Dorsolateral prefrontal cortex (tissue), 120 donors: ENCODE measurements at regions of chr2 and their contacts with region 1.

Region 1: GRCh38 chr2:127106951-127107621 is at the start of gene BIN1:
- DNase-seq: peak; percentile 78 to 96 (median 92)
- H3K4me3 ChIP-seq: peak within 1 kb of the TSS; percentile 75 to 100 (median 96)
- H3K27ac ChIP-seq: peak within 1 kb of the TSS; percentile 92 to 99 (median 98)
- H3K27me3 ChIP-seq: no peaks in the 10 kb centered on the region
- CTCF ChIP-seq: peak in 19 of 56 donors; percentile 5 to 39 (median 17)
- total RNA-seq, gene BIN1: 151 to 703 (median 290) TPM

Region 2: GRCh38 chr2:126602334-126602733 is 504.8 kb before region 1 on chr2:
- intact Hi-C with region 1: no loop called
- DNase-seq: no peak
- H3K4me3 ChIP-seq: no peak overlapping the region
- H3K27ac ChIP-seq: no peak overlapping the region
- H3K27me3 ChIP-seq: no peaks in the 10 kb centered on the region
- CTCF ChIP-seq: no peak

Region 3: DNA sequence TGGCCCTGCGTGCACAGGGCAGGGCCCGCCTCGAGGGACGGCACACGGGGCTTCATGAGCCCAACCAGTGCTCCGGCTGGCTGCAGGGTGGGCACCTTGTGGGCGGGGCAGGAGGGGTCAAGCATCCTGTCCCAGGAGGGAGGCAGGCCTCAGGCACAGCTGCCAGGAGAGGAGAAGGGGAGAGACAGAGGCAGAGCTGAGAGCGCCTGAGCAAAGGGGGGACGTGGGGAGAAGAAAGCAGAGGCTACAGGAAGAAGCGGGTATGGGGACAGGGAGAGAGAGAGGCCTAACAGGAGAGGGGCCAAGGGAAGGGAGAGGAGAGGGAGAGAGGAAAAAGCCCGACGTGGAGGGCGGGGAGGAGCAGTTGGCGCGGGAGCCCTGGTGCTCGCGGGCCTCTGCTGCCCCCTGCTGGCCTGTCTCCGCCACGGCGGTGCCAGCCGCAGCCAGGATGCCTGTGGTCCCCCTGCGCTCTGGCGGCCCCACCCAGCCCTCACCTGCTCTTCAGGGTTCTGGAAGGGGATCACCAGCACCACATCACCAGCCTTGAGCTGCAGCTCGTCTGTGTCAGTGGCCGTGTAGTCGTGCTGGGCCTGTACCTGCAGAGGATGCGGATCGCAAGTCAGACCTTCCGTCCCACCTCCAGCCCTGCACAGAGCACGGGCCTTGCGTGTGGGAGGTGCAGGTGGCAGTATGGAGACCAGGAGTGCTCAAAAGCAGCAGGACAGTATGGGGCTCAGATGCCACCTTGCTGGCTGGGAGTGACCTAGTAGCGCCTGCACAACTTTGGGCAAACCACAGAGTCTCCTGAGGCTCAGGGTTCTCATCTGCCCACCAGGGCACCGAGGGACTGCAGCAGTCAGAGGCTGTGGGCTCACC is 56.9 kb before region 1 on chr2:
- intact Hi-C with region 1: loop called in 1 of 2 experiments (anchors 10 kb)
- DNase-seq: peak; percentile 63 to 85 (median 75)
- H3K4me3 ChIP-seq: no peak overlapping the region
- H3K27ac ChIP-seq: peak overlapping the region in 58 of 59 donors; percentile 18 to 98 (median 86)
- H3K27me3 ChIP-seq: no peaks in the 10 kb centered on the region
- CTCF ChIP-seq: peak; percentile 76 to 99 (median 96)

Region 4: GRCh38 chr2:127072970-127073369 is 34.1 kb before region 1 on chr2:
- intact Hi-C with region 1: loop called (anchors 1 to 2 kb)
- DNase-seq: peak; percentile 44 to 97 (median 93)
- H3K4me3 ChIP-seq: peak overlapping the region in 8 of 59 donors; percentile 10 to 31 (median 18)
- H3K27ac ChIP-seq: peak overlapping the region; percentile 76 to 99 (median 95)
- H3K27me3 ChIP-seq: no peaks in the 10 kb centered on the region
- CTCF ChIP-seq: peak in 3 of 56 donors; percentile 6 to 21 (median 19)

Region 5: DNA sequence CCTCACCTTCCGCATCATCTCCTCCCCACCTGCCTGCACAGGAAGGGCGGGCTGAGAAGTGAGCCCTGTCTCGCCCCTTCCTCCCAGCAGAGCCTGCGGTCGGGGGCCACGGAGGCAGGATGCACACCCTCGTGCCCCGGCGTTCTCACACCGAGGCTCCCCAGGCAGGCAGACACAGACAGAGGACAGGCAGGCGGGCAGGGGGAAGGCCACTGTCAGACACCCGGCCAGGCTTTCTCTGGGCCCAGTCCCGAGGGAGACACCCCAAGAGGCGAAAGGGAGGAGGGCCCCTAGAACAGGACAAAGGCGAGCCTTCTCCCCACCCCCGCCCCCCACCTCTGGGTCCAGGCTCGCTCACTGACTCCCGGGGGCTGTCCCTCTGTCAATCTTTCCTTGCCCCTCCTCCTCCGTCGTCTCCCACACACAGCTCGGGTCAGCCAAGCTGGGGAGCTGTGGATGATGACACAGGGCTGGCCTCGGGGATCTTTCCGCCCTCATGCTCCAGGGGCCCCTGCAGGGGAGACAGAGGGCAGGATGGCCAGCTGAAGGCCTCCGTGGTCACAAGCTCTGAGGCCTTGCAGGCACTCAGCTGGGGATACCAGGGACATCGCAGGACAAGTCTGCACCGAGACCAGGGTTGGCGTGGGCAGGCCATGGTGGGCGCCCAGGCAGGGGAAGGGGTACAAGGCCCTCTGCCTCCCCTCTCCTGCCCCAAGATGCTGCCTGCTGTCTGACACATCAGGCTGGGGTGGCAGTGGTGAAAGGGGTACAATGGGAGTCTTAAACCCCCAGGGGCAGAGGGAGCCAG is 25.1 kb before region 1 on chr2:
- intact Hi-C with region 1: loop called (anchors 1 to 2 kb)
- DNase-seq: peak in 9 of 10 donors; percentile 70 to 88 (median 80)
- H3K4me3 ChIP-seq: peak overlapping the region in 54 of 59 donors; percentile 1 to 61 (median 39)
- H3K27ac ChIP-seq: peak overlapping the region in 58 of 59 donors; percentile 68 to 99 (median 90)
- H3K27me3 ChIP-seq: no peaks in the 10 kb centered on the region
- CTCF ChIP-seq: peak in 6 of 56 donors; percentile 10 to 27 (median 16)

Region 6: GRCh38 chr2:127118467-127118866 is 11.4 kb after region 1 on chr2:
- intact Hi-C with region 1: loop called in 1 of 2 experiments (anchors 1 kb)
- DNase-seq: peak in 8 of 10 donors; percentile 76 to 93 (median 88)
- H3K4me3 ChIP-seq: no peak overlapping the region
- H3K27ac ChIP-seq: peak overlapping the region in 58 of 59 donors; percentile 74 to 99 (median 94)
- H3K27me3 ChIP-seq: no peaks in the 10 kb centered on the region
- CTCF ChIP-seq: peak in 2 of 56 donors; percentile 18 to 30

Region 7: GRCh38 chr2:127143841-127144782 is 37.0 kb after region 1 on chr2:
- intact Hi-C with region 1: loop called (anchors 1 to 5 kb)
- DNase-seq: peak in 7 of 10 donors; percentile 72 to 87 (median 79)
- H3K4me3 ChIP-seq: peak overlapping the region in 1 of 59 donors; percentile 10
- H3K27ac ChIP-seq: peak overlapping the region; percentile 2 to 98 (median 92)
- H3K27me3 ChIP-seq: no peaks in the 10 kb centered on the region
- CTCF ChIP-seq: peak in 54 of 56 donors; percentile 21 to 75 (median 52)

Region 8: GRCh38 chr2:127157651-127158470 is 50.8 kb after region 1 on chr2:
- intact Hi-C with region 1: no loop called
- DNase-seq: peak in 1 of 10 donors; percentile 29
- H3K4me3 ChIP-seq: no peak overlapping the region
- H3K27ac ChIP-seq: peak overlapping the region in 28 of 59 donors; percentile 4 to 74 (median 44)
- H3K27me3 ChIP-seq: no peaks in the 10 kb centered on the region
- CTCF ChIP-seq: peak in 23 of 56 donors; percentile 6 to 51 (median 24)

Region 9: DNA sequence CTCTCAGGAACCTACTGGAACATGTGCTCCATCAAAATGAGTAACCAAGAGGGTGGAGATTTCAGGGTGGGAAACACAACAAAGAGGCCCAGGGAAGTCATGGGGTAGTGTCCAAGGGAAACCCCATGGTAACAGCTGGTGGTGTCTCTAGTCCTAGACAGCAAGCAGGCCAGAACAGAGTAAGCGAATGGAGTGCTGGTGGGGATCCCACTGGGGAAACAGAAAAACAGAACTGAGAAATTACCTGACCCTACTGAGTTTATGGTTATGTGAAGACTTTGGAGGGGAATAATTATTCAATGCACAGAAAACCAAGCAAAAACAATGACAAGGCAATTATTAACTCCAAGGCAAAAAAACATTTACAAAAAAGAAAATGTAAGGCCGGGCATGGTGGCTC is 169.9 kb after region 1 on chr2:
- intact Hi-C with region 1: loop called in 1 of 2 experiments (anchors 10 kb)
- DNase-seq: no peak
- H3K4me3 ChIP-seq: no peak overlapping the region
- H3K27ac ChIP-seq: peak overlapping the region in 4 of 59 donors; percentile 16 to 52 (median 20)
- H3K27me3 ChIP-seq: no peaks in the 10 kb centered on the region
- CTCF ChIP-seq: no peak